HCT116 (cell line): ENCODE measurements at regions of chr1 and their contacts with region 1.

Region 1: DNA sequence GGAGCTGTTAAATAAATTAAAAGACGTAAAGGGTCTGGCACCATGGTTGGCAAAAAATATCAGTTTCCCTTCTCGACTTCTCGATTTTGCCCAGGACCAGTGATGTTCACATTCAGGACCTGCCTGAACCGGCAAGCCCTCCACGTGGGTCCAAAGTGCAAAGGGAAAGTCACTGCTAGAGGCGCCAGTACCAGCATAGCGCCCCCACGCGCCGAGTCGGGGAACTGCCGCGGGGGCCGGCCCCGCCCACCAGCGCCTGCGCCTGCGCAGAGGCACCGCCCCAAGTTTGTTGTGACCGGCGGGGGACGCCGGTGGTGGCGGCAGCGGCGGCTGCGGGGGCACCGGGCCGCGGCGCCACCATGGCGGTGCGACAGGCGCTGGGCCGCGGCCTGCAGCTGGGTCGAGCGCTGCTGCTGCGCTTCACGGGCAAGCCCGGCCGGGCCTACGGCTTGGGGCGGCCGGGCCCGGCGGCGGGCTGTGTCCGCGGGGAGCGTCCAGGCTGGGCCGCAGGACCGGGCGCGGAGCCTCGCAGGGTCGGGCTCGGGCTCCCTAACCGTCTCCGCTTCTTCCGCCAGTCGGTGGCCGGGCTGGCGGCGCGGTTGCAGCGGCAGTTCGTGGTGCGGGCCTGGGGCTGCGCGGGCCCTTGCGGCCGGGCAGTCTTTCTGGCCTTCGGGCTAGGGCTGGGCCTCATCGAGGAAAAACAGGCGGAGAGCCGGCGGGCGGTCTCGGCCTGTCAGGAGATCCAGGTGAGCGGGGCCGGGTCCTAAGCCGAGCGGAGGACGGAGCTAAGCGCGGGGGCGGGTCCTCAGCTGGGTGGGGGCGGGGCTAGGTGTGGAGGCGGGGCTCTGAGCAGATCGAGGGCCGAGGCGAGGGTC is at the start of gene PINK1:
- DNase-seq: peak; percentile 57
- ATAC-seq: peak; percentile 87
- H3K4me3 ChIP-seq: peak within 1 kb of the TSS; percentile 60 to 61
- H3K27ac ChIP-seq: peak within 1 kb of the TSS; percentile 95
- H3K4me1 ChIP-seq: peaks cover 8 to 22% of the 10 kb centered on the region in 2 experiments
- H3K27me3 ChIP-seq: no peaks in the 10 kb centered on the region
- CTCF ChIP-seq: peak; percentile 85 to 98 (median 95)
- POLR2A ChIP-seq: no peak
- RAD21 ChIP-seq: peak; percentile 84
- total RNA-seq, gene PINK1: 29.4 TPM

Region 2: DNA sequence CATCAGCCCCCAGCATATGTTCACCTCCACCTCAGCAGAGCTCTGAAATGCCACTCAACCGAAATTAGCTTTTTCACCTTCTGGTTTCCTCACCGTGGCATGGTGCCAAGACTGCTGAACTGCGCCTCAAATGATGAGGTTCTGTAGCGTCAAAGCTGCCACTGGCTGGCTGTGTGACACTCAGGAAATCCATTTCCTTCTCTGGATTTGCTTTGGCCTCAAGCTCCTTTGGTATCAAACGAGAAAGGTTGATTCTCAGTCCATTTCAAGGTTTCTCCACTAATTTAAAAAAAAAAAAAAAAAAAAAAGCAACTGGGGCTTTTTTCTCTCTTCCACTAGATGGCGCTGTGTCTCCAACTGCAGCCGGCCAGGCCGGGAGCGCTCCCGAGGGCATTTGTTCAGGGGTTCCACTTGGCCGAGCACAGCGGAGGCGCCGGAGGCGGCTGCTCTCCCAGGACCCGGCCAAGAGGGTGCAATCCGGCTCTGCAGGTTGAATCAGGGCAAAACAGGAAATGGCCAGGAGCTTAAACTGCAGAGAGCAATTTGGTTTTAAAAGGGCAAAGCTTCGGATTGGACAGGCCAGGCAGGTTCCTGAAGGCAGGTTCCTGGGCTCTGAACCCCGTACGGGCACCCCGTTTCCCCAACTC is 420.6 kb before region 1 on chr1:
- CTCF ChIA-PET with region 1: no interaction called
- POLR2A ChIA-PET with region 1: no interaction called
- RAD21 ChIA-PET with region 1: no interaction called
- intact Hi-C with region 1: loop called (anchors 10 kb)
- DNase-seq: peak; percentile 54
- ATAC-seq: peak; percentile 90
- H3K4me3 ChIP-seq: peak overlapping the region; percentile 2 to 24; a peak in 1 of 4 replicates
- H3K27ac ChIP-seq: no peak overlapping the region
- H3K4me1 ChIP-seq: peaks cover 9 to 28% of the 10 kb centered on the region in 2 experiments
- H3K27me3 ChIP-seq: no peaks in the 10 kb centered on the region
- CTCF ChIP-seq: peak; percentile 76 to 86 (median 81)
- POLR2A ChIP-seq: no peak
- RAD21 ChIP-seq: peak; percentile 86

Region 3: DNA sequence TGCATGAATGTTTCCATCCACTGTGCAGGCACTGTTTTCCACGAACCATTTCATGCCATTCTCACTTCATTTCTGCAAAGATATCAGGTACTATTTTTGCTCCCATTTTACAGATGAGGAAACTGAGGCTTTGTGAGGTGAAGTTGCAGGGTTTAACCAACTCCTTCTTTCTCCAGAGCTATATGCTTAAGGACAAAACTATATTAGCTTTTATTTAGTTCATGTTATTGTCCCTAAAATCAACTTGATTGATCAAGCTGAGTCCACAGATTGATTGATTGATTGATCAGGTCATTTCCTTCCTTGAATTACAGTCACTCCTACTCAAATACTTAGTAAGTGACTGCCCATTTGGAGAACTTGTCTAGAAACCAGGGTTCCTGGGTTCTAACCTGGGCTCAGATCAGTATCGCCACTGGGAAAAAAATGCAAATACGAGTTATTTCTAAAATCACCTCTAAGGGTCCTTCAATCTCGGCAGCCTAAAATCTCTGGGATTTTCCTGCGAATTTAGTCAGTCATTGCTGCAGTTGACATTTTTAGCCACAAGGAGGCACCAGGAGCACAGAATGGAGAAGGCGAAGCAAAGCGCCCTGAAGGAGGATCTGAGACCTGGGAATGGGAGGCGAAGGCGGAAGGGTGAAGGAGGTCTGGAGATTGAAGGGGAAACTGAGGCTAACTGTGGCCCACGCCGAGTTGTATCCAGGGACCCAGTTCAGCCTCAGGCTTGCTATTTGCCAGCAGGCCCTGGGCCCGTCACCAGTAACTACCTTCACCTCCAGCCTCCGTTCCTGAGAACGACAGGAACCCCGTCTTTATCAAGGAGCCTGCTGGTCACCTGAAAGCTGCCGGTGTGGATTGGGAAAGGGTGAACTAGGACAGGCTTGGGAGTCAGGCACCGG is 111.2 kb before region 1 on chr1:
- CTCF ChIA-PET with region 1: interaction called, 5 read pairs
- POLR2A ChIA-PET with region 1: interaction called, 5 read pairs
- RAD21 ChIA-PET with region 1: interaction called in 1 of 2 experiments, 4 read pairs
- intact Hi-C with region 1: loop called (anchors 2 kb)
- DNase-seq: peak; percentile 81
- ATAC-seq: peak; percentile 94
- H3K4me3 ChIP-seq: peak overlapping the region in 1 of 2 experiments; percentile 18; a peak in 2 of 4 replicates
- H3K27ac ChIP-seq: no peak overlapping the region
- H3K4me1 ChIP-seq: peaks cover 0 to 8% of the 10 kb centered on the region in 2 experiments; a peak in 2 of 4 replicates
- H3K27me3 ChIP-seq: no peaks in the 10 kb centered on the region
- CTCF ChIP-seq: peak; percentile 83 to 96 (median 91)
- POLR2A ChIP-seq: no peak
- RAD21 ChIP-seq: peak; percentile 99

Region 4: GRCh38 chr1:20589331-20590278 is 43.8 kb before region 1 on chr1:
- CTCF ChIA-PET with region 1: interaction called, 21 read pairs
- POLR2A ChIA-PET with region 1: interaction called, 3 read pairs
- RAD21 ChIA-PET with region 1: interaction called in 1 of 2 experiments, 4 read pairs
- intact Hi-C with region 1: no loop called
- DNase-seq: no peak
- ATAC-seq: peak; percentile 23
- H3K4me3 ChIP-seq: peak overlapping the region; percentile 68 to 71
- H3K27ac ChIP-seq: peak overlapping the region; percentile 38; the same call in 1 of the 2 replicates
- H3K4me1 ChIP-seq: peaks cover 23 to 45% of the 10 kb centered on the region in 2 experiments
- H3K27me3 ChIP-seq: no peaks in the 10 kb centered on the region
- CTCF ChIP-seq: no peak
- POLR2A ChIP-seq: no peak
- RAD21 ChIP-seq: no peak

Region 5: GRCh38 chr1:20645414-20645813 is 12.0 kb after region 1 on chr1:
- CTCF ChIA-PET with region 1: interaction called, 10 read pairs
- POLR2A ChIA-PET with region 1: interaction called, 6 read pairs
- RAD21 ChIA-PET with region 1: no interaction called
- intact Hi-C with region 1: no loop called
- DNase-seq: no peak
- ATAC-seq: no peak
- H3K4me3 ChIP-seq: no peak overlapping the region
- H3K27ac ChIP-seq: no peak overlapping the region
- H3K4me1 ChIP-seq: no peaks in the 10 kb centered on the region
- H3K27me3 ChIP-seq: no peaks in the 10 kb centered on the region
- CTCF ChIP-seq: no peak
- POLR2A ChIP-seq: no peak
- RAD21 ChIP-seq: no peak